CD4-positive, alpha-beta T cell (primary cell): ENCODE measurements at regions of chr6 and their contacts with region 1.

Region 1: DNA sequence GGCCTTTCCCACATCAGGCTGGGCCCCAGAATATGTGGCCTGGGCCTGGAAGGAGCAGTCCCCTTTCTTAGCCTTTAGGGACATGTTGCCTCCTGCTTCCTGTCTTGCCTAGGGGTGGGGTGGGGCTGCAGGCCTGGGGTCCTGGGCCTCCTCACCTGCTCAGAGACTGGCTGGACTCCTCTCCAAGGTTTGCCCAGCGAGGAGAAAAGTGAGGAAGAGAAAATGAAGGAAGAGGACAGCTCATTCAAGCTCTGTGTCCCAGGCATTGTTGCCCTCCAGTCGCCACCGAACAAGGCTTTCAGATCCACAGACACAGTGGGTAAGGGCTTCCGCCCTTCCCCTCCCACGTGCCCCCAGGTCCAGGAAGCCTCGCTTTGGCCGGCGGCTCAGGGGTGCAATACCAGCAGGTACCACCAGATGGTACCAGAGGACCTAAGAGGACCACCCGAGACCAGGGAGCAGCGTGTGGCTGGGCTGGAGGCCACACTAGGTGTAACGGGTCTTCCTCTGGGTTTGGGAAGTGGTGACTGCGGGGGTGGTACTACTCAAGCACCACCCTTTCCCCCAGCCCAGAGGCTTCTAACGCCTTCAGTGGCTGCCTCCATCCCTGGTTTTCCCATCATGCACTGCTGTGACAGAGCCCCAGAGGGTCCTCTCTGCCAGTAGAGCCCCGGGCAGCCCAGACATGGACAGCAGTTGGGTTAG is 5.5 kb upstream of the BAK1 start:
- DNase-seq: peak; percentile 74 to 93 (median 86)
- ATAC-seq: peak; percentile 96
- H3K4me3 ChIP-seq: peak overlapping the region; percentile 6
- H3K4me3 Mint-ChIP-seq: peak overlapping the region; percentile 62
- H3K27ac ChIP-seq: peak overlapping the region; percentile 37 to 40
- H3K27ac Mint-ChIP-seq: peak overlapping the region; percentile 87
- H3K4me1 ChIP-seq: peaks cover 25% of the 10 kb centered on the region
- H3K4me1 Mint-ChIP-seq: peaks cover 26% of the 10 kb centered on the region
- H3K27me3 ChIP-seq: no peaks in the 10 kb centered on the region
- H3K27me3 Mint-ChIP-seq: no peaks in the 10 kb centered on the region
- CTCF ChIP-seq: peak; percentile 98

Region 2: GRCh38 chr6:33633462-33634158 is 48.1 kb after region 1 on chr6:
- CTCF ChIA-PET with region 1: interaction called, 6 read pairs
- POLR2A ChIA-PET with region 1: no interaction called
- intact Hi-C with region 1: loop called (anchors 2 to 5 kb)
- DNase-seq: peak in 13 of 14 experiments; percentile 17 to 85 (median 49)
- ATAC-seq: peak; percentile 63
- H3K4me3 ChIP-seq: peak overlapping the region; percentile 55
- H3K4me3 Mint-ChIP-seq: peak overlapping the region; percentile 93
- H3K27ac ChIP-seq: no peak overlapping the region
- H3K27ac Mint-ChIP-seq: peak overlapping the region; percentile 68
- H3K4me1 ChIP-seq: peaks cover 56% of the 10 kb centered on the region
- H3K4me1 Mint-ChIP-seq: peaks cover 71% of the 10 kb centered on the region
- H3K27me3 ChIP-seq: no peaks in the 10 kb centered on the region
- H3K27me3 Mint-ChIP-seq: no peaks in the 10 kb centered on the region
- CTCF ChIP-seq: no peak

Region 3: GRCh38 chr6:33700391-33701050 is 115.0 kb after region 1 on chr6:
- CTCF ChIA-PET with region 1: interaction called, 9 read pairs
- POLR2A ChIA-PET with region 1: interaction called, 4 read pairs
- intact Hi-C with region 1: loop called (anchors 1 kb)
- DNase-seq: peak; percentile 60 to 88 (median 72)
- ATAC-seq: peak; percentile 58
- H3K4me3 ChIP-seq: no peak overlapping the region
- H3K4me3 Mint-ChIP-seq: no peak overlapping the region
- H3K27ac ChIP-seq: no peak overlapping the region
- H3K27ac Mint-ChIP-seq: peak overlapping the region; percentile 84
- H3K4me1 ChIP-seq: peaks cover 42% of the 10 kb centered on the region
- H3K4me1 Mint-ChIP-seq: peaks cover 50% of the 10 kb centered on the region
- H3K27me3 ChIP-seq: no peaks in the 10 kb centered on the region
- H3K27me3 Mint-ChIP-seq: no peaks in the 10 kb centered on the region
- CTCF ChIP-seq: peak; percentile 73

Region 4: GRCh38 chr6:33744001-33744848 is 158.7 kb after region 1 on chr6:
- CTCF ChIA-PET with region 1: no interaction called
- POLR2A ChIA-PET with region 1: no interaction called
- intact Hi-C with region 1: loop called in 1 of 2 experiments (anchors 2 kb)
- DNase-seq: peak; percentile 51 to 85 (median 65)
- ATAC-seq: peak; percentile 94
- H3K4me3 ChIP-seq: no peak overlapping the region
- H3K4me3 Mint-ChIP-seq: no peak overlapping the region
- H3K27ac ChIP-seq: no peak overlapping the region
- H3K27ac Mint-ChIP-seq: no peak overlapping the region
- H3K4me1 ChIP-seq: peaks cover 5% of the 10 kb centered on the region
- H3K4me1 Mint-ChIP-seq: peaks cover 5% of the 10 kb centered on the region
- H3K27me3 ChIP-seq: peaks cover 4% of the 10 kb centered on the region in 2 experiments
- H3K27me3 Mint-ChIP-seq: peaks cover 12% of the 10 kb centered on the region
- CTCF ChIP-seq: peak; percentile 86

Region 5: DNA sequence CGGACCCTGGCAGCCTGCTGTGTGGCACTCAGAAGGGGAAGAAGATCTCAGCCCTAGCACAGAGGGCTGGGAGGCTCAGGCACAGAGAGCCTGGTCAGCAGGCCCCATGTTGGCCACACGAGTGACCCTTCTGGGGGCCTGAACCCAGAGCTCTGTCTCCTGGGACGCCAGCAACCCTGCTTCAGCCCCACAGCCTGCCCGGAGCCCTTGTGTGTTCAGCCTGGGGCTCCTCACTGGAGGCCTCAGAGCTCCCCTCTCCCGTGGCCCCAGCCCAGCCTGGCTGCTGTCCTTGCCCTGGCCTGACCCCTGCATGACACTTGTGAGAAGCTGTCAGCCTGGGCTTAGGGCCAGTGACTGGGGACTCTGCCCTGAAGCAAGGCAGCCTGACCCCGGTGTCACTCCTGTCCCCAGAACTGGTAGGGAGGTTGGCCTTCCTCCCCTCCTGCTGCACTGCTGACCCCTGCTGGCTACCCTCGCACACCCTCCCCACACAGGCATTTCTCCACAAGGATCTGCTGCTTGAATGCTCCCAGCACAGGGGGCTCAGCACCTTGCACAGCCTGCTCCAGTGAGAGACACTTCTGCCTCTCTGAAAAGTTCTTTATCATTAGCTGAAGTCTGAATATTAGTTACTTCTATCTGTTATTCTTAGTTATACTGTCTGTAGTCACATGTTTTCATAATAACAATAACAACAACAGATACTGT is 176.5 kb after region 1 on chr6:
- CTCF ChIA-PET with region 1: no interaction called
- POLR2A ChIA-PET with region 1: no interaction called
- intact Hi-C with region 1: loop called in 1 of 2 experiments (anchors 1 kb)
- DNase-seq: peak in 11 of 14 experiments; percentile 9 to 59 (median 36)
- ATAC-seq: no peak
- H3K4me3 ChIP-seq: no peak overlapping the region
- H3K4me3 Mint-ChIP-seq: no peak overlapping the region
- H3K27ac ChIP-seq: no peak overlapping the region
- H3K27ac Mint-ChIP-seq: no peak overlapping the region
- H3K4me1 ChIP-seq: no peaks in the 10 kb centered on the region
- H3K4me1 Mint-ChIP-seq: no peaks in the 10 kb centered on the region
- H3K27me3 ChIP-seq: no peaks in the 10 kb centered on the region
- H3K27me3 Mint-ChIP-seq: no peaks in the 10 kb centered on the region
- CTCF ChIP-seq: peak; percentile 23

Region 6: GRCh38 chr6:34027445-34027936 is 441.9 kb after region 1 on chr6:
- CTCF ChIA-PET with region 1: no interaction called
- POLR2A ChIA-PET with region 1: no interaction called
- intact Hi-C with region 1: loop called in 1 of 2 experiments (anchors 5 kb)
- DNase-seq: peak; percentile 46 to 77 (median 62)
- ATAC-seq: peak; percentile 76
- H3K4me3 ChIP-seq: no peak overlapping the region
- H3K4me3 Mint-ChIP-seq: no peak overlapping the region
- H3K27ac ChIP-seq: no peak overlapping the region
- H3K27ac Mint-ChIP-seq: no peak overlapping the region
- H3K4me1 ChIP-seq: peaks cover 4% of the 10 kb centered on the region
- H3K4me1 Mint-ChIP-seq: no peaks in the 10 kb centered on the region
- H3K27me3 ChIP-seq: no peaks in the 10 kb centered on the region
- H3K27me3 Mint-ChIP-seq: no peaks in the 10 kb centered on the region
- CTCF ChIP-seq: peak; percentile 84

Region 7: GRCh38 chr6:34154668-34155447 is 569.3 kb after region 1 on chr6:
- CTCF ChIA-PET with region 1: no interaction called
- POLR2A ChIA-PET with region 1: no interaction called
- intact Hi-C with region 1: loop called (anchors 5 to 10 kb)
- DNase-seq: peak; percentile 45 to 80 (median 63)
- ATAC-seq: peak; percentile 97
- H3K4me3 ChIP-seq: peak overlapping the region; percentile 25
- H3K4me3 Mint-ChIP-seq: no peak overlapping the region
- H3K27ac ChIP-seq: no peak overlapping the region
- H3K27ac Mint-ChIP-seq: no peak overlapping the region
- H3K4me1 ChIP-seq: peaks cover 13% of the 10 kb centered on the region
- H3K4me1 Mint-ChIP-seq: no peaks in the 10 kb centered on the region
- H3K27me3 ChIP-seq: peaks cover 21 to 37% of the 10 kb centered on the region in 2 experiments
- H3K27me3 Mint-ChIP-seq: peaks cover 38% of the 10 kb centered on the region
- CTCF ChIP-seq: peak; percentile 92